Heart right ventricle (tissue), 16 donors: ENCODE measurements at regions of chr12 and their contacts with region 1.

Region 1: DNA sequence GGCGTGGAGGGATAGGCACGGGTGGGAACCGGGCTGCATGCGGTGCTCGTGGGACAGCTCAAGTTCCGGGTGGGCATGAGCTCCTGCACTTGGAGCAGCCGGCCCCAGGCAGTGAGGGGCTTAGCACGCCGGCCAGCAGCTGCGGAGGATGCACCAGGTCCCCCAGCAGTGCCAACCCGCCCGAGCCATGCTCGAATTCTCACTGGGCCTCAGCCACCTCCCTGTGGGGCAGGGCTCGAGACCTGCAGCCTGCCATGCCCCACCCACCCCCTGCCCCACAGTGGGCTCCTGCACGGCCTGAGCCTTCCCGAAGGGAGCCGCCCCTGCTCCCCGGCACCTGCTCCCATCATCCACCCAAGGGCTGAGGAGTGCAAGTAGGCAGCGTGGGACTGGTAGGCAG is 1501.8 kb downstream of the AACS start:
- DNase-seq: no peak
- ATAC-seq: no peak
- H3K4me3 ChIP-seq: no peak overlapping the region
- H3K27ac ChIP-seq: no peak overlapping the region
- H3K4me1 ChIP-seq: no peaks in the 10 kb centered on the region
- H3K27me3 ChIP-seq: no peaks in the 10 kb centered on the region
- CTCF ChIP-seq: no peak

Region 2: DNA sequence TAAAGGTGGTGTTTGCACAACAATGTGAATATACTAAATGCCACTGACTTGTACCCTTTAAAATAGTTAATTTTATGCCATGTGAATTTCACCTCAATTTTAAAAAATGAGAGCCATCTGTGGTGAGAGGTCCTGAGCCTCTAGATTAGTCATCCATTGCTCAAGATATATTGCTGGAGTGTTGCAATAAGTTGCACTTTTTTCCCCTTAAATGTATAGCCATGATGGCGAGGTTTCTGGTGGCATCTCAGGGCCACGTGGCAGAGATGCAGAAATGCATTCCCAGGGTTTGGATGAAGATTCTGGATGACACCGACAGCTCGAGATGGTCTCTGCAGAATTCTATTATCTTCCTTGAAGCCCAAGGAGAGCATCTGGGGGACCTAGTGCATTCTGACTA is 1348.1 kb before region 1 on chr12:
- intact Hi-C with region 1: loop called in 1 of 10 experiments (anchors 5 kb)
- DNase-seq: no peak
- ATAC-seq: no peak
- H3K4me3 ChIP-seq: no peak overlapping the region
- H3K27ac ChIP-seq: no peak overlapping the region
- H3K4me1 ChIP-seq: no peaks in the 10 kb centered on the region
- H3K27me3 ChIP-seq: peaks cover 0 to 57% (median 24%) of the 10 kb centered on the region in 7 donors
- CTCF ChIP-seq: no peak

Region 3: DNA sequence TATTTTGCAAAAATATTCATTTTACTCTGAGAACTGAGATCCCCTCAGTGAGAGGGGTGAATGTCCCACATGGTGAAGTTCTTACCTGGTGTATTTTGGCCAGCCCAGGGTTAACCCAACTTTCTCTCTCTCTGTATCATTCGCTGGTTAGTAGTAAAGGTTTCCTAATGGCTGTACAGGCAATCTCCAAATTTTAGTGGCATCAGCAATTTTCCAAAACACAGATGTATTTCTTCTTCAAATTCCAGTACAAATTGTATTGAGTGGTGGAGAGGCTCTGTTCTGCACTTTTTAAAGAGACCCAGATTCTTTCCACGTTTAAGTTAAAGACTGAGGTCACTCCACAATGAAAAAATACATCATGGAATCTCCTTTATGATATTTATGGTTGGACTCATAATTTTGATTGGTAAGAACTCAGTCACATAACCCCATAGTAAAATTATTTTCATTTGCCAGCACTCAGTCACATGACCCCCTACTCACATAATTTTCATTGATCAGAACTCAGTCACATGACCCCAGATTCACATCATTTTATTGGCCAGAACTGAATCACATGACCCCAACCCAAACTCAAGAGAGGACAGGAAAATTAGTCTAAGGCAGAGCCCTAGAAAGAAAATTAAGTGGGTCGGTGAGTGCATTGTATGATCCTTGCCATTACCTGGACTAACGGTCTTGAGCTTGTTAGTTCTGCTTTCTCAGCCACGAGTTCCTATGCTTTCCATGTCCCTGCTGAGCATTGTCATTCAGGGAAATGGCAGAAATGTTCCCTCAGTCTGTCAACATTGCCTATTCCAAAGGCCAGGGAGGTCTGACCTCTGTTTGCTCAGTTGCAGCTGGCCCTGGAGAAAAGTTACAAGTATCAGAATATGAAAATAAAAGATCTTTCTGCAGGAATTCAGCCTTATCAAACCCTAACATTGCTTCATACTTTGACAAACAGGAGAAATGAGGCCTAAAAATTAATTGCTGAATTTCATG is 34.4 kb after region 1 on chr12:
- intact Hi-C with region 1: no loop called
- DNase-seq: no peak
- ATAC-seq: no peak
- H3K4me3 ChIP-seq: no peak overlapping the region
- H3K27ac ChIP-seq: no peak overlapping the region
- H3K4me1 ChIP-seq: no peaks in the 10 kb centered on the region
- H3K27me3 ChIP-seq: no peaks in the 10 kb centered on the region
- CTCF ChIP-seq: no peak